Astrocyte of the spinal cord (primary cell): ENCODE measurements at regions of chr11 and their contacts with region 1.

Region 1: GRCh38 chr11:45102810-45103621 is 43.4 kb upstream of the PRDM11 start:
- DNase-seq: peak; percentile 76
- H3K4me3 ChIP-seq: no peak overlapping the region
- CTCF ChIP-seq: peak; percentile 93

Region 2: DNA sequence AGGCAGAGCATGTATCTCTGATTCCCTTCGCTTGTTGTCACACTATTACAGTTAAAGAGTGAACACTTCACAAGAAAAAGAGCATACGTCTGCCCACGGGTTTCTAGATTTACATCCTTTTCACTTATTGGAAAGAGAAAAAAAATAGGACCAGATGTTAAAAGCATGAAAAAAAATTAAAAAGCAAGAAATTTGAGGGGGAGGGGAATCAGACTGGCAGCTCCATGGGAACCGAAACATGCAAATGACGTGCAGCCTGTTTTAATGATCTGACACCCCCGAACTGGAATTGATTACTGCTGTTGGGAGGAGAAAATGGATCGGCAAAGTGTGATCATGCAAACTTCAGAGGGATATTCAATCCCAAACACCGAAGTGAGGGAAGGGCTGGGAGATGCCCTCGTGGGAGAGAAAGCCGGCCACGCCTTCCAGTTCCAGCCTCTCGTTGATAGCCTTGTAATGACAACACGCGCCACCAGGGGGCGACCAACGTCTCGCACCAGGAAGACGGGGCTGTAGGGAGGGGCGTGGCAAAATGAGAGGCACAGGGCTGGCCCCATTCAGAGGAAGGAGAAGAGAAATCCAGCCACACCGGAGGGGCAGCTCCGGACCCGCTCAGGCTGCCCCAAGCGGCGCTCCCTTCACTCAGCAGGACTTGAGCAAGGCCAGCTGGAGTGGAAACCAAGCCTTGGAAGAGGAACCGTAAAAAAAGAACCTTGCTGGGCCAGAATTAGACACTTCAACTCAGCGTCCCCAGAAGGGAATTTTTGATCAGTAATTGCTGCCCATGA is 236.9 kb after region 1 on chr11:
- in situ Hi-C with region 1: loop called (anchors 25 kb)
- DNase-seq: peak; percentile 81
- H3K4me3 ChIP-seq: no peak overlapping the region
- CTCF ChIP-seq: peak; percentile 81